ENCODE measurements at regions of chr5 and their contacts with region 1.

Region 1: GRCh38 chr5:138223532-138223931 is 10.4 kb upstream of the CDC23 start:
- DNase-seq: no peak
- H3K4me3 ChIP-seq: no peak overlapping the region
- H3K27ac ChIP-seq: no peak overlapping the region
- H3K4me1 ChIP-seq: no peaks in the 10 kb centered on the region
- H3K27me3 ChIP-seq: no peaks in the 10 kb centered on the region; the same call in 1 of the 2 replicates
- CTCF ChIP-seq: no peak
- EP300 ChIP-seq: no peak
- RAD21 ChIP-seq: no peak

Region 2: DNA sequence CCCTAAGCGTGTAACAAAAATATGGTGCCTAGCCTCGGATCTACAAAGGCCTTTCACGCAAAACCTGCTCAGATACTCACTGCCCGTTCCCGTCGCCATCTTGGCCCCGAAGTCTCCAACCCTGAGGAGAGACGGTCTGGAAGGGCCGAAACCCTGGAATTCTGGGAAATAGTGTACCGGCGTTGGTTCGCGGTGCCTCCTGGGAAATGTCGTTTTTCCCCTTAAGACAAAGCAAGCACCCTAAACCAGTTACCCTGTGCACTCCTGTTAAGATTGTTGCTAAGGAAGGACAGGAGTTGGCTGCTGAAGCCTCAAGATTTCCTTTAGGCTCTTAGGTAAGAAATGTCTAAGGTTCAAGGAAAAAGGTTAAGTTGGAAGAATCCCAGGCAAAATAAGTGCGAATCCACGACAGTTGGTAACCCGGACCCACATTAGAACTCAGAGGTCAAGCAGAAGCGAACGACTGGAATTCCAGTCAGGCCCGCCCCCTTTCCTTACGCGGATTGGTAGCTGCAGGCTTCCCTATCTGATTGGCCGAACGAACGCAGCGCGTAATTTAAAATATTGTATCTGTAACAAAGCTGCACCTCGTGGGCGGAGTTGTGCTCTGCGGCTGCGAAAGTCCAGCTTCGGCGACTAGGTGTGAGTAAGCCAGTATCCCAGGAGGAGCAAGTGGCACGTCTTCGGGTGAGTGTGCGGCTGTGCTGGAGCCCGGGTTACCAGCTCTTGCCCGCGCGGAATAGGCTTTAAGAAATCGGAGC is 44.8 kb before region 1 on chr5 and contains the starts of genes BRD8 and KIF20A:
- CTCF ChIA-PET with region 1: interaction called, 12 read pairs
- POLR2A ChIA-PET with region 1: no interaction called
- DNase-seq: peak; percentile 87
- H3K4me3 ChIP-seq: peak within 1 kb of the TSS; percentile 81 to 90
- H3K27ac ChIP-seq: peak within 1 kb of the TSS; percentile 86 to 97
- H3K4me1 ChIP-seq: peaks cover 0 to 13% of the 10 kb centered on the region in 2 experiments; a peak in 2 of 4 replicates
- H3K27me3 ChIP-seq: no peaks in the 10 kb centered on the region
- CTCF ChIP-seq: no peak
- EP300 ChIP-seq: peak in 1 of 2 experiments; percentile 19; a peak in 1 of 4 replicates
- RAD21 ChIP-seq: no peak
- polyA plus RNA-seq, gene BRD8: 46.2 and 64.4 TPM in 2 replicates
- polyA plus RNA-seq, gene KIF20A: 16.0 and 17.4 TPM in 2 replicates

Region 3: GRCh38 chr5:138213161-138214029 is 10.1 kb before region 1 on chr5 and contains the start of gene CDC23:
- CTCF ChIA-PET with region 1: interaction called, 17 read pairs
- POLR2A ChIA-PET with region 1: interaction called, 5 read pairs
- DNase-seq: peak; percentile 92
- H3K4me3 ChIP-seq: peak within 1 kb of the TSS; percentile 79 to 95
- H3K27ac ChIP-seq: peak within 1 kb of the TSS; percentile 56 to 64
- H3K4me1 ChIP-seq: peaks cover 5 to 12% of the 10 kb centered on the region in 2 experiments; a peak in 2 of 4 replicates
- H3K27me3 ChIP-seq: no peaks in the 10 kb centered on the region
- CTCF ChIP-seq: no peak
- EP300 ChIP-seq: no peak
- RAD21 ChIP-seq: no peak
- polyA plus RNA-seq, gene CDC23: 20.2 and 31.5 TPM in 2 replicates

Region 4: DNA sequence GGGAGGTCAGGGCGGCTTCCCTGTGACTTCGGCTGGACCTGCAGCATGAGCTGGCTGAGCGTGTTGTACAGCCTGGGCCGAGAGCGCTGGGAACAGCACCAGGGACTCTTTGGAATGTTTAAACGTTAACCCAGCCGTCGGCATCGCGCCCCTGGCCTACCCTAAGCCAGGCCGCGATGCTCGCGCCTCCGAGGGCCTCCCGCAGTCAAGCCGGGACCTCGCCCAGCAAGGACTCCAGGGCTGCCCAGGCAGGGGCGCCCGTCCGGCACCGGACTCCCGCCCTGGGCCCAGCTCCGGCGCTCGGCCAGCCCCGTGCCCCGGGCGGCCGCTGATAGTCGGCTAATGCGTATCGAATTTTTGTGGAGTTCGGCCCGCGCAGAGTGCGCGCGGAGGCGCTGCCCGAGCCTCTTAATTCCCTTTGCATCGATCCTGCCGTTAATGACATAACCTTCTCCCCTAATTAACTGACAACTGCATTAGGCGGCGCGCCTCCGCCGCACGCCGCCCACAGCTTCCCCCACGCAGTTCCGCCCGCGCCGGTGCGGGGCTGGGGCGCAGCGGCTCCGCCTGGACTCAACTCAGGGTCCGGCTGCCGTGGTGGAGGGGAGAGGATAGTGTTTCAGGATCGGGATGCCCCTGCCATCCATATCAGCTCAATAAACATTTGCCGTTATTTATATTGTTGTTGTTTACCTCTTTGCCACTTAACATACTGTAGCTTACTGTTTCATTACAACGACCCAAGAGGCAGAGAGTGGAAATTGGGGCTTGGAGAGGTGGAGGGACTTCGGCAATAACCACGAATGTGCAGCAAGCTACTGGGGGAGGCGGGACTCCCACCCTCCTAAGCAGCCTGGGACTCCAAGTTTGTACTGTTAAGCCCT is 18.4 kb after region 1 on chr5:
- CTCF ChIA-PET with region 1: interaction called, 36 read pairs
- POLR2A ChIA-PET with region 1: interaction called, 3 read pairs
- DNase-seq: peak; percentile 87
- H3K4me3 ChIP-seq: peak overlapping the region; percentile 44 to 52
- H3K27ac ChIP-seq: no peak overlapping the region
- H3K4me1 ChIP-seq: peaks cover 0 to 10% of the 10 kb centered on the region in 2 experiments; a peak in 1 of 4 replicates
- H3K27me3 ChIP-seq: peaks cover 16% of the 10 kb centered on the region; the same call in 1 of the 2 replicates
- CTCF ChIP-seq: no peak
- EP300 ChIP-seq: no peak
- RAD21 ChIP-seq: no peak

Region 5: DNA sequence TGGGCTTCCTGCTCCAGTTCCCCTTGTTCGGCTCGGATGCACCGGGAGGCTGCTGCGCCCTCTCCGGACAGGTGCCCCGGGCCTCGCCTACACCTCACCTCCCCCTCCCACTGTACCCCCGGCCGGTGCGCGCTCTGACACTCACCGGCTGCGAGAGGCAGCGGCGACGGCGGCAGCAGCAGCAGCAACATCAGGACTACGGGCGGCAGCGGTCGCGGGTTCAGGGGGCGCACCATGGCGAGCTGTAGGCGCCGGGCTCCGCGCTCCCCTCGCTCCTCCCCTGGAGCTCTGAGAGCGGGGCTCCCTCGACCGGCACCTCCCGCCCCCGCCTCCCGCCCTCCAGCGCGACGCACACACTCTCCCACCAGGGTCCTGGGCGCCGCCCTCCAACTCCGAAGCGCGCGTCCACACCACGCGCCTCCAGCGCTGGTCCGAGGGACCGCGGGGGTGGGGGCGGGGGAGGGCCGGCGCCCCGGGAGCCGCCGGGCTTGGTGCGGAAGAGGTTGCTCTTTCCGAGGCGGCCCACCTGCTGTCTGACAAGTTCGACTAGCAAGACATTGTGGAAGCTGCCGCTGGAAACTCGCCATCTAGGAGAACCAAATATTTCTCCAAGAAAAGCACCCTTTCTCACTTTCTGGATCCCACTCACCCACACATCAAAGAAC is 50.8 kb after region 1 on chr5 and contains the start of gene GFRA3:
- CTCF ChIA-PET with region 1: interaction called, 55 read pairs
- POLR2A ChIA-PET with region 1: no interaction called
- DNase-seq: peak; percentile 77
- H3K4me3 ChIP-seq: peak within 1 kb of the TSS; percentile 35 to 39; a peak in 3 of 4 replicates
- H3K27ac ChIP-seq: peak within 1 kb of the TSS in 1 of 2 experiments; percentile 95; a peak in 2 of 4 replicates
- H3K4me1 ChIP-seq: peaks cover 0 to 22% of the 10 kb centered on the region in 2 experiments; a peak in 2 of 4 replicates
- H3K27me3 ChIP-seq: no peaks in the 10 kb centered on the region
- CTCF ChIP-seq: no peak
- EP300 ChIP-seq: no peak
- RAD21 ChIP-seq: no peak
- polyA plus RNA-seq, gene GFRA3: 0.11 and 0.15 TPM in 2 replicates

Region 6: DNA sequence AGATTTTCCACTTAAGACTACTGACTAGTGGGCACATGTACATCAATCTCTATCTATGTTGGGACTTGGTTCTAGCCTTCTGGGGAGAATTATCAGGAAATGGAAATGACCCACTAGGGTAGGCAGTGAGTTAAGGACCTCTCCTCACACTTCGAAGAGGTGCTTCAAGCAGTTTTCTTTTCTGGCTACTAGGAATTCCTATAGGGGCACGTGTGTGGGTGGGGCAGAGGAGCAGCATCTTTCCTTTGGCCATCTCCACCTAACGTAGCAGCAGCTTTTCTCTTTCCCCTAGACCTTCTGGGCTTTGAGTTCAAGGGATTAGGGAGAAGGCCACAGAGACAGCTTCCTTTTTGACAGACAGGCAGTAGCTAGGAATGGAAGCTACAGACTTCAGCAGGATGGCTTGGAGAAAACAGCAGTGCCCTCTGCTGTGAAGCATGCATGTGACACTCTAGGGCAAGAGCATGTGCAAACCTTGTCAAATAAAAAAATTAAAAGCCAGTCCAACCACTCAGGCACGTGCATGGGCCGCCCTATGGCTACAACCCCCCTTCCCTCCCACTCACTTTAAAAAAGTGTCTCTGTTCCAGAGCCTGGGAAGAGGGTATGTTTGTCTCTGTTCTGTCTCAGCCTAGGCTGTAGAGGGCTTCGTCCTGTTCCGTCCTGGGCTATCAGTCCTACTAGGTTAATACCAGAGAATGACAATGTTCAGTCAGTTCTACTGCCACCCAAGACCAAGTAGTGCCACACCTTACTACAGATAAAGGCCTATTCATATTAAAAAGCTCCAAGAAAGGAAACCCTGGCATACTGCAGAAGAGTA is 59.6 kb after region 1 on chr5:
- CTCF ChIA-PET with region 1: interaction called, 125 read pairs
- POLR2A ChIA-PET with region 1: interaction called, 3 read pairs
- DNase-seq: peak; percentile 74
- H3K4me3 ChIP-seq: no peak overlapping the region; a peak in 1 of 4 replicates
- H3K27ac ChIP-seq: no peak overlapping the region
- H3K4me1 ChIP-seq: no peaks in the 10 kb centered on the region; a peak in 1 of 4 replicates
- H3K27me3 ChIP-seq: no peaks in the 10 kb centered on the region
- CTCF ChIP-seq: peak; percentile 63
- EP300 ChIP-seq: no peak
- RAD21 ChIP-seq: peak; percentile 97